ENCODE measurements at regions of chr15 and their contacts with region 1.

Region 1: DNA sequence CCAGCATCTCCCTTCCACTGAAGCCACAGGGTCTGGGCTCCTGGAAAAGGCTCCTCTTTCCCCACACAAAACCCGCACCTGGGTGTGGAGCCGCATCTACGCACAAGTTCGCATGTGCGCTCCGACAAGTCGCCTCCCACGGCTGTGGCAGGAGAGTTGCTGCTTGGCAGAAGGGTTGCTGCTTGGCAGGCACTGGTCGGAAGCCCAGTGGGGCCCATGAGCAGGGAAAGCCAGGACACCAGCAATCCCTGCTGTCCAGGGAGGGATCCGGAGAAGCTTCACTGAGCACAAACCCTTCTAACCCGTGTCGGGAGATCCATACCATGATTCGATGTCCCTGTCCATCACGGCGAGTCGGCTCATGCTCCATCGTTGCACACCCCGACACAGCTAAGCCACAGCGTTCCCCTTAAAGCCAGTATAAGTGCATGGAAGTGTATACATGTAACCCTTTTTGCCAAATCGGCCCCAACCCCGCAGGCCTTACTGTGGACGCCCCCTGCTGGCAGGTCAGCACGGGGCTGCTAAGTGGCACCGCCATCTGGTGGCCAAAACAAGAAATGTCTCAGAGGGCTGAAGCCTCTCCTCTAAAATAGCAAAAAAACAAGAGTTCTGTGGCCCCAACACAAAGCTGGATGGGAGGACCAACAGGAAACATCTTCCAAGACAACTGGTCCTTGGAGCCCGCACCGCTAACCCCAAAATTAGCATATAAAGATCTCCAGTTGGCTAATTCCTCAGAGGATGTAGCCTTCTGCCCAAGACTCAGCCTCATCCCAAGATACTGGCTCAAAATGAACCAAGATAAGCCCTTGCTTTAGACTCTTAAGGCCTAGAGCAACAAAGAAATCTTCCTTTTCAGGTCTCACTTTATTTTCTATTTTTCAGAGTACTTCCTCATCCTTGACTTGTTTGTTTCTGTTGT is 8.3 kb downstream of the ANKRD63 start:
- DNase-seq: peak; percentile 89
- H3K4me3 ChIP-seq: no peak overlapping the region
- H3K27ac ChIP-seq: no peak overlapping the region
- H3K4me1 ChIP-seq: peaks cover 25% of the 10 kb centered on the region
- H3K27me3 ChIP-seq: no peaks in the 10 kb centered on the region
- CTCF ChIP-seq: peak; percentile 100

Region 2: GRCh38 chr15:38699633-38700230 is 1574.9 kb before region 1 on chr15:
- CTCF ChIA-PET with region 1: no interaction called
- POLR2A ChIA-PET with region 1: no interaction called
- intact Hi-C with region 1: loop called (anchors 10 kb)
- DNase-seq: peak; percentile 60
- H3K4me3 ChIP-seq: no peak overlapping the region
- H3K27ac ChIP-seq: no peak overlapping the region
- H3K4me1 ChIP-seq: no peaks in the 10 kb centered on the region
- H3K27me3 ChIP-seq: peaks cover 9% of the 10 kb centered on the region
- CTCF ChIP-seq: peak; percentile 91

Region 3: DNA sequence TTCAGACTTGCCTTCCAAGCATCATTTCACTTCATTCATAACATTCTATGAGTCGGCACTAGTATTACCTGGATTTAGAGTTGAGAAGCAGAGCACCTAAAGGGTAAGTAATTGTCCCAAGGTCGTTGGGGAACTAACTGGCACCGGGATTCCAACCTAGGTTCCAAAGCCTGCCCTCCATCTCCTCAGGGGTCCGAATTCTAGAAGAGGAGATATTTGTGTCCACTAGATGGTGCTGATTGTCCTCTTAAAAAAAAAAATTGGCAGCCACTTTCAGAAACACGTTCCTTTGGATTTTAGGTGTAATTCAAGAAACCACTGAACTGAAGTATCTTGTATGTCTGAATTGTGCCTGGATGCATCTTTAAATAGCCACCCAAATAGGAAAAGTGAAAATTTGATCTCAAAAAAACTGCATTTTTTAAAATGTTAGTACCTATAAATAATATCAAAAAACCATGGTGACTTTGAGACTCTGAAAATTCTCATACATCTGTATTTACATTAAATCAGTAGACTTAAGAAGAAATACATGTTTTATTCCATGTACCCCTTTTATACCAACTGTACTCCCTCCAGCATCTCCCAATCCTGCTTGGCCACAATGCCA is 488.1 kb before region 1 on chr15:
- CTCF ChIA-PET with region 1: no interaction called
- POLR2A ChIA-PET with region 1: no interaction called
- intact Hi-C with region 1: loop called (anchors 5 kb)
- DNase-seq: peak; percentile 82
- H3K4me3 ChIP-seq: no peak overlapping the region
- H3K27ac ChIP-seq: no peak overlapping the region
- H3K4me1 ChIP-seq: peaks cover 14% of the 10 kb centered on the region
- H3K27me3 ChIP-seq: no peaks in the 10 kb centered on the region
- CTCF ChIP-seq: peak; percentile 71

Region 4: GRCh38 chr15:40044717-40045571 is 229.7 kb before region 1 on chr15:
- CTCF ChIA-PET with region 1: interaction called, 9 read pairs
- POLR2A ChIA-PET with region 1: interaction called, 5 read pairs
- intact Hi-C with region 1: loop called (anchors 1 kb)
- DNase-seq: peak; percentile 90
- H3K4me3 ChIP-seq: peak overlapping the region; percentile 21
- H3K27ac ChIP-seq: peak overlapping the region; percentile 69
- H3K4me1 ChIP-seq: peaks cover 35% of the 10 kb centered on the region
- H3K27me3 ChIP-seq: no peaks in the 10 kb centered on the region
- CTCF ChIP-seq: peak; percentile 98

Region 5: DNA sequence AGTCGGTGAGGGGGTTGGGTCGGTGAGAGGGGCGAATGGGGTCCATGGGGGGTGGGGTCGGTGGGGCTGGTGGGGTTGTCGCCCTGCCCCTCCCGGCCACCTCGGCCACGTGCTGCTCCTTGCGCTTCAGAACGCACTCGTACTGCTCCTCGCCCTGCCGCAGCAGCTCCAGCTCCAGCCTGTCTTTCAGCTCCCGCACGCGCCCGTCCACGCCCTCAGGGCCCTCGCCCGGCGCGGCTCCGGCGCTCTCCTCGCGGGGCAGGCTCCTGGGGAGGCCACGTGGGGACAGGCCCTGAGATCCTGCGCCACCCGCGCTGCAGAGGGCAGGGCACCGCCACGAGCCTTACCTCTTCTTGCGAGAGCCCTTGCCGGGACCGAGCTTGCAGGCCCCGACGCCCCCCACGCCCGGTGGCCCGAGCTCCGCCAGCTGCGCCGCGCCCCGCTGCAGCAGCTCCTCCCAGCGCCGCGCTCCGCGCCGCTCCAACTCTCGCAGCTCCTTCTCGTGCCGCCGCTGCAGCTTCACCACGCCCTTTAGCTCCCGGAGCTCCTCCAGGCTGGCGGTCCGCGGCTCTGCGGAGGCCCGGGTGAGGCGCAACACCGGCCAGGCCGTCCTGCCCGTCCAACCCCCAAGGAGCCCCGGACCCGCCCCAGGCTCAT is 16.4 kb after region 1 on chr15:
- CTCF ChIA-PET with region 1: interaction called, 10 read pairs
- POLR2A ChIA-PET with region 1: no interaction called
- intact Hi-C with region 1: no loop called
- DNase-seq: peak; percentile 73
- H3K4me3 ChIP-seq: peak overlapping the region; percentile 41
- H3K27ac ChIP-seq: no peak overlapping the region
- H3K4me1 ChIP-seq: peaks cover 21% of the 10 kb centered on the region
- H3K27me3 ChIP-seq: no peaks in the 10 kb centered on the region
- CTCF ChIP-seq: no peak

Region 6: GRCh38 chr15:40338041-40338657 is 63.5 kb after region 1 on chr15:
- CTCF ChIA-PET with region 1: interaction called, 25 read pairs
- POLR2A ChIA-PET with region 1: no interaction called
- intact Hi-C with region 1: loop called (anchors 1 kb)
- DNase-seq: peak; percentile 90
- H3K4me3 ChIP-seq: no peak overlapping the region
- H3K27ac ChIP-seq: peak overlapping the region; percentile 87
- H3K4me1 ChIP-seq: peaks cover 77% of the 10 kb centered on the region
- H3K27me3 ChIP-seq: no peaks in the 10 kb centered on the region
- CTCF ChIP-seq: peak; percentile 93